ENCODE measurements at regions of chr11 and their contacts with region 1.

Region 1: DNA sequence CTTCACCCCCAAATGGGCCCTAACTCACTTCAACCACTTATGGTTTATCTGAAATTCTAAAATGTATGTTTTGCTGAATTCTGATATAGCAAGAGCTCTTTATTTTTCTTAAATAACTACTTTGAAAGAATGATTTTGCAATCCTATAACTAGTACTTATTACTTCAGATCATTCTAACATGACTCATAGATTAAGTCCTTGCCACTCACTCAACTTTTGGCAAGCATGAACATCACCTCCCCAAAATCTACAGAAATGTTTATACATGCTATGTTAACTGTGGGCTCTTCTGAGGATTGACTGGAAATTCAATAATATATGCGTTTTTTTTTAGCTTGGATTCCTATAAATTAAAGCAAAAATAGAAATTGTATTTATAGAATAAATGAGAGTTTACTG is 367.4 kb upstream of the FAT3 start:
- DNase-seq: no peak
- ATAC-seq: no peak
- H3K4me3 ChIP-seq: no peak overlapping the region
- H3K27ac ChIP-seq: peak overlapping the region in 1 of 12 donors; percentile 13
- H3K4me1 ChIP-seq: peaks cover 0 to under 1% (median 0%) of the 10 kb centered on the region in 12 donors
- H3K27me3 ChIP-seq: no peaks in the 10 kb centered on the region
- CTCF ChIP-seq: no peak
- POLR2A ChIP-seq: no peak

Region 2: GRCh38 chr11:91790346-91791170 is 66.6 kb before region 1 on chr11:
- intact Hi-C with region 1: loop called in 1 of 10 experiments (anchors 10 kb)
- DNase-seq: no peak
- ATAC-seq: no peak
- H3K4me3 ChIP-seq: no peak overlapping the region
- H3K27ac ChIP-seq: no peak overlapping the region
- H3K4me1 ChIP-seq: peaks cover 0 to 6% (median 0%) of the 10 kb centered on the region in 12 donors
- H3K27me3 ChIP-seq: no peaks in the 10 kb centered on the region
- CTCF ChIP-seq: no peak
- POLR2A ChIP-seq: no peak